Activated naive CD4-positive, alpha-beta T cell treated with anti-CD3 and anti-CD28 coated beads for 36 hours (primary cell): ENCODE measurements at regions of chr22 and their contacts with region 1.

Region 1: DNA sequence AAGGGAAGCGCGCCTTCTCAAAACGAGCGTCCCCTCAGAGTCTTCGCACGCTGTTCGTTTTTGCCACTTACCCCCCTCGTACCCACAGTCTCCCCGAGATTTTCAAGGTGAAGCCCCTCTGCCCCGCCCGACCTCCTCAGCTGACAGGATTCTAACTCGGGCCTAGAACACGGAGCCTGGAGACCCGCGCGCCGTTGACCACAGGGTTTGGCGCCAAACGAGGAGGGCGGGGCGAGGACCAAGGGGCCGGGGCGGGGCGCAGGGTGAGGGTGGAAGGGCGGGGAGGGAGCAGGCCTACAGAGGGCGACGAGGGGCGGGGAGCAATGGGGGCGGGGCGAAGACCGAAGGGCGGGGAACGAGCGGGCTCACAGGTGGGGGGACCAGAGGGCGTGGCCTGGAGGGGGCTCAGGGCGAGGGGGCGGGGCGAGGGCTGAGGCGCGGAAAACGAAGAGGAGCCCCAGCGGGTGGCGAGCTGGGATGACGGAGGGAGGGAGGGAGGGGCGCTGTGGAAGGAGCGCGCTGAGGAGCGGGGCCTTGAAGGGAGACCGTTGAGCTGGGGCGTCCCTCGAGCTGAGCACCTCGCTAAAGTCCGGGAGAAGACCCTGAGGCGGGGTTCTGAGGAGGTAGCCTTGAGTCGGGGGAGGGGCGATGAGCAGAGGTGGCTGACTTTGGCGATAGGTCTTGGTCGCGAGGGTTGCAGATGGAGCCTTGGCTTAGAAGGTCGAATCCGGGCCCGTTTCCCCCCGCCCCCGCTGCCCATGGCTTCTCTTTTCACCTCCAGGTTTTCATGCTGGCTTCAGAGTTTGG is at the start of gene DMC1:
- DNase-seq: peak; percentile 99
- H3K4me3 Mint-ChIP-seq: peak within 1 kb of the TSS; percentile 81
- H3K27ac Mint-ChIP-seq: peak within 1 kb of the TSS; percentile 95
- H3K4me1 Mint-ChIP-seq: peaks cover 11% of the 10 kb centered on the region
- H3K27me3 Mint-ChIP-seq: no peaks in the 10 kb centered on the region
- total RNA-seq, gene DMC1: 13.0 to 16.3 TPM

Region 2: GRCh38 chr22:38262051-38262795 is 308.0 kb before region 1 on chr22:
- CTCF ChIA-PET with region 1: no interaction called
- intact Hi-C with region 1: loop called (anchors 1 kb)
- DNase-seq: peak; percentile 60
- H3K4me3 Mint-ChIP-seq: no peak overlapping the region
- H3K27ac Mint-ChIP-seq: no peak overlapping the region
- H3K4me1 Mint-ChIP-seq: peaks cover 32% of the 10 kb centered on the region
- H3K27me3 Mint-ChIP-seq: no peaks in the 10 kb centered on the region

Region 3: GRCh38 chr22:38398609-38399461 is 171.3 kb before region 1 on chr22:
- CTCF ChIA-PET with region 1: interaction called, 3 read pairs
- intact Hi-C with region 1: loop called (anchors 5 kb)
- DNase-seq: peak; percentile 84
- H3K4me3 Mint-ChIP-seq: peak overlapping the region; percentile 72
- H3K27ac Mint-ChIP-seq: peak overlapping the region; percentile 50
- H3K4me1 Mint-ChIP-seq: peaks cover 25% of the 10 kb centered on the region
- H3K27me3 Mint-ChIP-seq: no peaks in the 10 kb centered on the region

Region 4: GRCh38 chr22:38461414-38462081 is 108.6 kb before region 1 on chr22:
- CTCF ChIA-PET with region 1: no interaction called
- intact Hi-C with region 1: loop called (anchors 1 kb)
- DNase-seq: peak; percentile 81
- H3K4me3 Mint-ChIP-seq: no peak overlapping the region
- H3K27ac Mint-ChIP-seq: no peak overlapping the region
- H3K4me1 Mint-ChIP-seq: peaks cover 7% of the 10 kb centered on the region
- H3K27me3 Mint-ChIP-seq: peaks cover 83% of the 10 kb centered on the region

Region 5: GRCh38 chr22:38531251-38531938 is 38.8 kb before region 1 on chr22:
- CTCF ChIA-PET with region 1: no interaction called
- intact Hi-C with region 1: loop called (anchors 1 kb)
- DNase-seq: no peak
- H3K4me3 Mint-ChIP-seq: peak overlapping the region; percentile 55
- H3K27ac Mint-ChIP-seq: peak overlapping the region; percentile 93
- H3K4me1 Mint-ChIP-seq: peaks cover 18% of the 10 kb centered on the region
- H3K27me3 Mint-ChIP-seq: no peaks in the 10 kb centered on the region